ENCODE measurements at regions of chr5 and their contacts with region 1.

Region 1: GRCh38 chr5:29162297-29162696 is 2031.2 kb upstream of the CDH6 start:
- DNase-seq: no peak
- H3K4me3 ChIP-seq: no peak overlapping the region
- H3K27ac ChIP-seq: no peak overlapping the region
- H3K4me1 ChIP-seq: no peaks in the 10 kb centered on the region
- H3K27me3 ChIP-seq: no peaks in the 10 kb centered on the region
- CTCF ChIP-seq: no peak

Region 2: DNA sequence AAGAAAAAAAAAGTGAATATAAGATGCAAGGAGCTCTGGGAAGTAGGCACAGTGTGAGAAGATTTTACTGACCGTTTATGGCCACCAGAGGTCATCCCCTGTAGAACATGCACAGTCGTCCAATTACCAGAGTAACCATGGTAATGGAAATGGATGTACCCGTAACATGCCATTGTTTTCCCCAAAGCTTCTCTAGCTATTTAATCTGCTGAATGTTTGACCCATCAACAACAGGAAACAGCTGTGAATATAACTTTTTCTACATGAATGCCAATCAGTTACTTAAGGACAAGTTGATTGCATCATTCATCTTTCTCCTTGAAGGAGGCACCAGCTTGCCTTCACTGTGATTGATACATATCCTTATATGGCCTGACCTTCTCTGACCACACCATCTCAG is 156.9 kb before region 1 on chr5:
- CTCF ChIA-PET with region 1: interaction called, 14 read pairs
- POLR2A ChIA-PET with region 1: no interaction called
- intact Hi-C with region 1: no loop called
- DNase-seq: no peak
- H3K4me3 ChIP-seq: no peak overlapping the region
- H3K27ac ChIP-seq: no peak overlapping the region
- H3K4me1 ChIP-seq: no peaks in the 10 kb centered on the region
- H3K27me3 ChIP-seq: no peaks in the 10 kb centered on the region
- CTCF ChIP-seq: peak; percentile 53

Region 3: DNA sequence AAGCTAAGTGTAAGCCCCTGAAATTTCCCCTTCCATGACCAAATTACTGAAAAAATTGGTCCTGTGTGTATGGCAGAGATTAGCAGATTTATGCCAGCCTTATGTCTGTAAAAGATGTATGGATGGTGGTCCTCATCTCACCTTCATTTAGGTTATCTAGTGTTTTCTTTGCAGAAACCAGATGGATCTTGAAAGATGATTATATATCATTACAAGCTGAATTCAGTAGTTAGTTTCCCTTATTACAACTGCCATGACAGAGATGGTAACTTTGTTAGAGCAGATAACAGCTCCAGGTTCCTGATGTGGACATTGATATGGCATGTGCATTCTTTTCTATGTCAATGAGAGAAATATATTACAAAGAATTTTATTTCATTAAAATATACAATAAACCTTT is 628.0 kb after region 1 on chr5:
- CTCF ChIA-PET with region 1: no interaction called
- POLR2A ChIA-PET with region 1: interaction called, 12 read pairs
- intact Hi-C with region 1: no loop called
- DNase-seq: no peak
- H3K4me3 ChIP-seq: no peak overlapping the region
- H3K27ac ChIP-seq: no peak overlapping the region
- H3K4me1 ChIP-seq: no peaks in the 10 kb centered on the region
- H3K27me3 ChIP-seq: no peaks in the 10 kb centered on the region
- CTCF ChIP-seq: no peak

Measured in PC-9 (cell line).